ENCODE measurements at regions of chr19 and their contacts with region 1.

Region 1: DNA sequence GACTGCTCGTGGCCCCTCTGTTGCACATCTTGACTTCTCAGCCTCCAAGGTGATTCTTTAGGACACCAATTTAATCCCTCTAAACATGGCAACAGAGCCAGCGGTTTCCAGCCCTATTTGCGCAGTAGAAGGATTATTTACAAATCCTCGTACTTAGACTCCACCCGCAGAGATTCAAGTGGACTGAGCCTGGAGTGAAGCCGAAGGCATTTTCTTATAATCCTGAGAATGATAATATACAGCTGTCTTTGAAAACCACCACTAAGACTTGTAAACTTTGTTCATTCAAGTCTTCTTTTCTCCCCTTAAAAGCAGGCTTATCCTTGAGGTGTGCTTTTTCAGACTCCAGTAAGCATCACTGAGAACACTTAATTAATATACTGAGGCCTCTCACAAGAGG is 4.8 kb upstream of the DPRX start:
- DNase-seq: no peak
- H3K4me3 ChIP-seq: no peak overlapping the region
- H3K27ac ChIP-seq: no peak overlapping the region
- H3K4me1 ChIP-seq: no peaks in the 10 kb centered on the region
- H3K27me3 ChIP-seq: no peaks in the 10 kb centered on the region
- CTCF ChIP-seq: no peak

Region 2: DNA sequence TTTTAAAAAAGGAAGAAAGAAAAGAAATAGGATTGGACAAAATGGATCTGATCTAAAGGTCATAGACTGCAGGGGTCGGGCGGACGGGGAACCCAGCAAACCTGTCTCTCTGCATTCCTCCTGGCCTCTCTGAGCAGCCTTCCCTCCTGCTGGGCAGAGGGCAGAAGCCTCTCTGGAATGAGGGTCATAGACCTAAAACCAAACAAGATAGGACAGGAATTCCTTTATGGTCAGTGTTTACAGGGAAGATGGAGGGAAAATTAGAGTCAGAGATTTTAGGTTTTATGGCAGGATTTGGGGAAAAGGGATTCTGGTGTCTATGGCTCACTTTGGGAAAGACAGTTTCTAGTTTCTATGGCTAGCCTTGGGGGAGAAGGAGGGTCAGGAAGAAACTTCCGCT is 14.2 kb before region 1 on chr19:
- CTCF ChIA-PET with region 1: no interaction called
- POLR2A ChIA-PET with region 1: no interaction called
- intact Hi-C with region 1: no loop called
- DNase-seq: no peak
- H3K4me3 ChIP-seq: no peak overlapping the region
- H3K27ac ChIP-seq: no peak overlapping the region
- H3K4me1 ChIP-seq: no peaks in the 10 kb centered on the region
- H3K27me3 ChIP-seq: no peaks in the 10 kb centered on the region
- CTCF ChIP-seq: no peak

Region 3: DNA sequence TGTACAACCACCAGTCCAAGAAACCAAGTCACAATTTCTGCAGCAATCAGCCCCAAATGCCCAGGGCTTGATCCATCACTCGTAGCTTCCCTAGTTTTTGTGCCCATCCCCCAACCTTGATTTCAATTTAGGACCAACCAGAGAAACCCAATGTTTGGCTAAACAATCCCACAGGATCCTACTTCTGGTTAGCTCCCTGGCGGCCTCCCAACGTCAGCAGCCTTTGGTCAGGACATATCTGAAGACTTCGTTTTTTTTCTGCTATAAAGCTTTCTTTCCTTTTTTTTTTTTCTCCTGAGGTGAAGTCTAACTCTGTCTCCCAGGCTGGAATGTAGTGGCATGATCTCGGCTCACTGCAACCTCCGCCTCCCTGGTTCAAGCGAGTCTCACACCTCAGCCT is 12.5 kb after region 1 on chr19:
- CTCF ChIA-PET with region 1: no interaction called
- POLR2A ChIA-PET with region 1: interaction called, 11 read pairs
- intact Hi-C with region 1: no loop called
- DNase-seq: no peak
- H3K4me3 ChIP-seq: no peak overlapping the region
- H3K27ac ChIP-seq: no peak overlapping the region
- H3K4me1 ChIP-seq: no peaks in the 10 kb centered on the region
- H3K27me3 ChIP-seq: no peaks in the 10 kb centered on the region
- CTCF ChIP-seq: no peak

Region 4: DNA sequence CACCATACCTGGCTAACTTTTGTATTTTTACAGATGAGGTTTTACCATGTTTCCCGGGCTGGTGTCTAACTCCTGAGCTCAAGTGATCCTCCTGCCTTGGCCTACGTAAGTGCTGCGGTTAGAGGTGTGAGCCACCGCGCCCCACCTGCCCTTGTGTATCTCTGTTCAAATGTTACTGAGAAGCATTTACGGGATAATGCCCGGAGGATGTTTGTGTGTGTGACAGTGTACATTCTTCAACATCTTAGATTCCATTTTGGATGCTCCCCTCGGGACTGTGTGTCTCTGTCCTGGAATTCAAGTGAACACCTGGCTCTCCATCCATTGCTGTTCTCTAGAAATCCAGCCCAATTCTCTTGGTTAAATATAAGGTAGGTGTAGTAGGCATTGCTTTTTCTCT is 103.4 kb after region 1 on chr19:
- CTCF ChIA-PET with region 1: no interaction called
- POLR2A ChIA-PET with region 1: no interaction called
- intact Hi-C with region 1: no loop called
- DNase-seq: no peak
- H3K4me3 ChIP-seq: no peak overlapping the region
- H3K27ac ChIP-seq: no peak overlapping the region
- H3K4me1 ChIP-seq: no peaks in the 10 kb centered on the region
- H3K27me3 ChIP-seq: no peaks in the 10 kb centered on the region
- CTCF ChIP-seq: no peak

Measured in A673 (cell line).